Body of pancreas (tissue), 4 donors: ENCODE measurements at regions of chr5 and their contacts with region 1.

Region 1: GRCh38 chr5:73088026-73088425 is 32.3 kb upstream of the TMEM171 start:
- DNase-seq: no peak
- ATAC-seq: no peak
- H3K4me3 ChIP-seq: no peak overlapping the region
- H3K27ac ChIP-seq: no peak overlapping the region
- H3K4me1 ChIP-seq: no peaks in the 10 kb centered on the region
- H3K27me3 ChIP-seq: no peaks in the 10 kb centered on the region
- CTCF ChIP-seq: no peak
- POLR2A ChIP-seq: no peak

Region 2: DNA sequence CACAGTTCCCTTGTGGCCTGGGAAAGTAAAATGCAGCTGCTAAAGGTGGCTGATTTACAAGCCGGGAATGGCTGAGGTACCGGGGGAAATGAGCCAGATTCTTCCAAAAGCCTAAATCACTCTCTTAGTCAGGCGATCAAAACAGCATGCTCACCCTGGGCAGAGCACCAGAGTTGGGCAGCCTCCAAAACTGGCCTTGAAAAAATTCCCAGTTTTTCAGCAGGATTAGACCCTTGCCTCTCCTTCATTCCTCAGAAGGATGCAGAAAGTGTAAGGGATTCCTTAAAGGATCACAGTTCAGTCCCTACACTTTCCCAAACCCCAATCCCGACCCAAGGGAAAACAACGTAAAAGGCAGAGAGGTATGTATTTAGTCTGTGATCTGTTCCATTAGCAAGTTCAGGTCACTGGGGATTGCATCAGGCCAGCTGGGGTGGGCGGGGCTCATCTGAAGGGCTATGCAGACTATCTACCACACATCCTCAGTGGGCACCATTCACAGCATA is 101.9 kb after region 1 on chr5:
- intact Hi-C with region 1: loop called (anchors 10 kb)
- DNase-seq: peak in 1 of 4 donors; percentile 23
- ATAC-seq: no peak
- H3K4me3 ChIP-seq: no peak overlapping the region
- H3K27ac ChIP-seq: no peak overlapping the region
- H3K4me1 ChIP-seq: no peaks in the 10 kb centered on the region
- H3K27me3 ChIP-seq: no peaks in the 10 kb centered on the region
- CTCF ChIP-seq: no peak
- POLR2A ChIP-seq: no peak